Stomach (tissue), 19 donors: ENCODE measurements at regions of chr3 and their contacts with region 1.

Region 1: DNA sequence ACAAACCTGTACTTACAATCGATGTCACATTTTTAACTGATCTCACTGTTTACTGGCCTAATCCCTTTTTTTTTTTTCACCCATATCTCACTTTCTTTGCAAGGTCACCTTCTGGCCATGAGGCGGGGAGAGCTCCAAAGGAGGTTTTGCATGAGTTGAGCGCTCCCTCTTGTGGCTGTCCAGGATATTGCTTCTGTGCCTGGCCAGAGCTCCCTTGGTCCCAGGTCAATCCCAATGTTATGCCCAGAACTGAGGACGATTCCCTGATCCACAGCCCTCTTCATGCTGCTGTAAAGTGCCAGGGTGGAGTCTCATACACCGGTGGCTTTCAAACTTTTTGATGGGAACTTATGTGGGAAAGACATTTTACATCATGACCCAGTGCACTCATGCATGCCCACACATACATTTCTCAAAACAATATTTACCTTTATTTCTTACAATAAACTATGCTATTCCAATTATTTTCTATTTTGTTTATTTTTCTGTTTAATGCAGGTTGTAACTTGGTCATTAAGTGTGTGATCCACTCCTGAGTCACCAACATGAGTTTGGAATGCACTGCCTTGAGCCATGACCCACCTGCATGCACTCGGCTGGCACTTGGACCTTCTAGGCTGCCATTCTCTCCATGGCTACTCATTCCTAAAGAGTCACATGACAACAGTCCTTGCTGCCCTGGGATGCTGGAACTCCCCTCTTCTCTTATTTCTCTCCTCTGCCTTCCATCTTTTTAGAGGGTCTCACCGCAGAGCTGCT is 9.6 kb upstream of the SST start:
- DNase-seq: peak; percentile 86 to 90
- H3K4me3 ChIP-seq: no peak overlapping the region
- H3K27ac ChIP-seq: no peak overlapping the region
- H3K4me1 ChIP-seq: peaks cover 0 to 12% (median 7%) of the 10 kb centered on the region in 4 donors
- H3K27me3 ChIP-seq: peaks cover 0 to 12% (median 0%) of the 10 kb centered on the region in 3 donors
- CTCF ChIP-seq: peak in 5 of 7 experiments; percentile 87 to 97 (median 89)
- EP300 ChIP-seq: no peak
- POLR2A ChIP-seq: no peak

Region 2: GRCh38 chr3:187227658-187228258 is 452.1 kb before region 1 on chr3:
- intact Hi-C with region 1: loop called (anchors 10 kb)
- DNase-seq: no peak
- H3K4me3 ChIP-seq: no peak overlapping the region
- H3K27ac ChIP-seq: no peak overlapping the region
- H3K4me1 ChIP-seq: peaks cover 0 to 13% (median 2%) of the 10 kb centered on the region in 4 donors
- H3K27me3 ChIP-seq: peaks cover 0 to 4% (median 0%) of the 10 kb centered on the region in 3 donors
- CTCF ChIP-seq: no peak
- EP300 ChIP-seq: no peak
- POLR2A ChIP-seq: no peak

Region 3: DNA sequence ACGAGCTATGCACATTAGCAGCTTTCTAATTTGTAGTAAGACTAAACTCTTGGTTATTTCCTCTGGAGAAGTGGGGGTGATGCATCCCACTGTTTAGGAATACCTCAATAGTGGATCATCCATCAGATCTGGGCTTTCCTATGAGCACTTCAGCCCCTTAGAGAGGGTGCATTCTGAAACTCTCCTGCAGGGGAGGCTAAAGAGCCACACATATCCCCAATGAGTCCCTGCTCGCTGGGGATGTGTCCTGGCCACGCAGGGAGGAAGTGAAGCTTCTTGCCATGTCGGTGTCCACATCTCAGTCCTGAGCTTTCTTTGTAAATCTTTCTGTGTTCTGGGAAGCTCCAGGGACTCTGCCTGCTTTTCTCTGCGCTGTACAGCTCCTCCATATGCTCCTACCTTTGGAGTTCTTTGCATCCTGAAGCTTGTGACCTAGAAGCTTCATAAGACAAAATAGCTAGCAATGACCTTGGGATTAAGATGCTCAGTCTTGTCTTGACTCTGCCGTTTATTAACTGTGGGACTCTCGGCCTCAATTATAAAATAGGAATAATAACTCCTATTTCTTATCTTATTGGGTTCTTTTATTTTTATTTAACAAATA is 360.0 kb before region 1 on chr3:
- intact Hi-C with region 1: loop called (anchors 2 kb)
- DNase-seq: peak; percentile 83 to 84
- H3K4me3 ChIP-seq: no peak overlapping the region
- H3K27ac ChIP-seq: no peak overlapping the region
- H3K4me1 ChIP-seq: peaks cover 0 to 17% (median 7%) of the 10 kb centered on the region in 4 donors
- H3K27me3 ChIP-seq: peaks cover 0 to 63% (median 0%) of the 10 kb centered on the region in 3 donors
- CTCF ChIP-seq: peak in 6 of 7 experiments; percentile 38 to 92 (median 82)
- EP300 ChIP-seq: no peak
- POLR2A ChIP-seq: no peak

Region 4: GRCh38 chr3:187616307-187616972 is 63.4 kb before region 1 on chr3:
- intact Hi-C with region 1: loop called (anchors 10 kb)
- DNase-seq: peak; percentile 58 to 70
- H3K4me3 ChIP-seq: no peak overlapping the region
- H3K27ac ChIP-seq: no peak overlapping the region
- H3K4me1 ChIP-seq: no peaks in the 10 kb centered on the region
- H3K27me3 ChIP-seq: peaks cover 0 to 4% (median 0%) of the 10 kb centered on the region in 3 donors
- CTCF ChIP-seq: peak in 5 of 7 experiments; percentile 52 to 79 (median 65)
- EP300 ChIP-seq: no peak
- POLR2A ChIP-seq: no peak

Region 5: GRCh38 chr3:187935623-187936156 is 255.9 kb after region 1 on chr3:
- intact Hi-C with region 1: no loop called
- DNase-seq: no peak
- H3K4me3 ChIP-seq: no peak overlapping the region
- H3K27ac ChIP-seq: no peak overlapping the region
- H3K4me1 ChIP-seq: no peaks in the 10 kb centered on the region
- H3K27me3 ChIP-seq: no peaks in the 10 kb centered on the region
- CTCF ChIP-seq: no peak
- EP300 ChIP-seq: no peak
- POLR2A ChIP-seq: no peak